G401 (cell line): ENCODE measurements at regions of chr5 and their contacts with region 1.

Region 1: GRCh38 chr5:134758504-134759341 is at the start of gene DDX46:
- DNase-seq: peak; percentile 94
- total RNA-seq, gene DDX46: 13.8 and 18.1 TPM in 2 replicates

Region 2: GRCh38 chr5:134708301-134708700 is 50.4 kb before region 1 on chr5:
- in situ Hi-C with region 1: no loop called
- DNase-seq: no peak

Region 3: DNA sequence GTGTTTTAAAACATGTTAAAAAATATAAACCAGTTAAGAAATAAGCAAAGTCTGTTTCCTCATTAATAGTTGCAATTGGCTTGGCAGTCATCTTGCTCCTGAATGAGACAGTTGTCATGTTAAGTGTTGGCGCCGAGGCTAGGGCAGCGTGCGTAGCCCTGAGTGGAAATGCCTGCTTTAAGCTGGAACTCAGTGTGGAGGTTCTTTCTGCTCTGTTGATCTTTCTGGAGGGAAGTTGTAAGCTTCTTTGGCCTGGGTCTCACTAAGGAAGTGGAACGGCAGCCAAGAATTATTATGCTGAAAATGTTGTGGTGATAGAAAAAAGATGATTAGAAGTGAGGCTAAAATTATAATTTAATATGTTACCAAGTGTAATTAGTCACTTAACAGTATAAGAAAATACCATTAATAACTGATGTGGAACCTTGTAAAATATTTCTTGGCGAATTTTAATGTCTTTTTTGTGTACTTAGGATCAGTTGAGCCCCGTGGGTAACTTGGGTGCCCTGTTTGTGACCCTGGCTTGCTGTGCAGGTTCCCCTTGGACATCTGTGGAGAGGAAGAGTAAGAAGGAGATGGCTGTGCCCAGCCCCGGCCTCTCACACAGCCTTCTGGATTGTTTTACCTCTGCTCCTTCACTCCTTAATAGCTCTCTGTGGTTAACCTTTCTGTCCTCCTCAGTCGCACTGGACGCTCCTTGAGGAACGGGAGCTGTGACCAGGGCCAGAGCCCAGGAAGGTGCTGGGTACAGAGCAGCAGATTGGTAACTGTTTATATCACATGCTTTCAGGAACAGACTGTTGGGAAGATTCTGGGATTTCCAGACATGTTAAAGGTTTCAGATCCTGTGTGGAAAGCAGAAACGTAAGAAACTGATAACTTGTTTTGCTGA is 177.2 kb after region 1 on chr5:
- in situ Hi-C with region 1: loop called (anchors 10 kb)
- DNase-seq: no peak